Activated CD4-positive, alpha-beta memory T cell treated with anti-CD3 and anti-CD28 coated beads for 36 hours (primary cell): ENCODE measurements at regions of chr15 and their contacts with region 1.

Region 1: DNA sequence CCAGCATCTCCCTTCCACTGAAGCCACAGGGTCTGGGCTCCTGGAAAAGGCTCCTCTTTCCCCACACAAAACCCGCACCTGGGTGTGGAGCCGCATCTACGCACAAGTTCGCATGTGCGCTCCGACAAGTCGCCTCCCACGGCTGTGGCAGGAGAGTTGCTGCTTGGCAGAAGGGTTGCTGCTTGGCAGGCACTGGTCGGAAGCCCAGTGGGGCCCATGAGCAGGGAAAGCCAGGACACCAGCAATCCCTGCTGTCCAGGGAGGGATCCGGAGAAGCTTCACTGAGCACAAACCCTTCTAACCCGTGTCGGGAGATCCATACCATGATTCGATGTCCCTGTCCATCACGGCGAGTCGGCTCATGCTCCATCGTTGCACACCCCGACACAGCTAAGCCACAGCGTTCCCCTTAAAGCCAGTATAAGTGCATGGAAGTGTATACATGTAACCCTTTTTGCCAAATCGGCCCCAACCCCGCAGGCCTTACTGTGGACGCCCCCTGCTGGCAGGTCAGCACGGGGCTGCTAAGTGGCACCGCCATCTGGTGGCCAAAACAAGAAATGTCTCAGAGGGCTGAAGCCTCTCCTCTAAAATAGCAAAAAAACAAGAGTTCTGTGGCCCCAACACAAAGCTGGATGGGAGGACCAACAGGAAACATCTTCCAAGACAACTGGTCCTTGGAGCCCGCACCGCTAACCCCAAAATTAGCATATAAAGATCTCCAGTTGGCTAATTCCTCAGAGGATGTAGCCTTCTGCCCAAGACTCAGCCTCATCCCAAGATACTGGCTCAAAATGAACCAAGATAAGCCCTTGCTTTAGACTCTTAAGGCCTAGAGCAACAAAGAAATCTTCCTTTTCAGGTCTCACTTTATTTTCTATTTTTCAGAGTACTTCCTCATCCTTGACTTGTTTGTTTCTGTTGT is 8.3 kb downstream of the ANKRD63 start:
- DNase-seq: peak; percentile 91
- H3K4me3 Mint-ChIP-seq: no peak overlapping the region
- H3K27ac Mint-ChIP-seq: peak overlapping the region; percentile 28
- H3K4me1 Mint-ChIP-seq: peaks cover 6% of the 10 kb centered on the region
- H3K27me3 Mint-ChIP-seq: peaks cover 27% of the 10 kb centered on the region

Region 2: GRCh38 chr15:39782441-39783138 is 492.0 kb before region 1 on chr15 and contains the start of gene FSIP1:
- CTCF ChIA-PET with region 1: interaction called, 10 read pairs
- POLR2A ChIA-PET with region 1: no interaction called
- intact Hi-C with region 1: loop called (anchors 1 kb)
- DNase-seq: peak; percentile 97
- H3K4me3 Mint-ChIP-seq: peak within 1 kb of the TSS; percentile 79
- H3K27ac Mint-ChIP-seq: peak within 1 kb of the TSS; percentile 93
- H3K4me1 Mint-ChIP-seq: peaks cover 41% of the 10 kb centered on the region
- H3K27me3 Mint-ChIP-seq: no peaks in the 10 kb centered on the region
- total RNA-seq, gene FSIP1: 0.29 to 0.68 TPM

Region 3: DNA sequence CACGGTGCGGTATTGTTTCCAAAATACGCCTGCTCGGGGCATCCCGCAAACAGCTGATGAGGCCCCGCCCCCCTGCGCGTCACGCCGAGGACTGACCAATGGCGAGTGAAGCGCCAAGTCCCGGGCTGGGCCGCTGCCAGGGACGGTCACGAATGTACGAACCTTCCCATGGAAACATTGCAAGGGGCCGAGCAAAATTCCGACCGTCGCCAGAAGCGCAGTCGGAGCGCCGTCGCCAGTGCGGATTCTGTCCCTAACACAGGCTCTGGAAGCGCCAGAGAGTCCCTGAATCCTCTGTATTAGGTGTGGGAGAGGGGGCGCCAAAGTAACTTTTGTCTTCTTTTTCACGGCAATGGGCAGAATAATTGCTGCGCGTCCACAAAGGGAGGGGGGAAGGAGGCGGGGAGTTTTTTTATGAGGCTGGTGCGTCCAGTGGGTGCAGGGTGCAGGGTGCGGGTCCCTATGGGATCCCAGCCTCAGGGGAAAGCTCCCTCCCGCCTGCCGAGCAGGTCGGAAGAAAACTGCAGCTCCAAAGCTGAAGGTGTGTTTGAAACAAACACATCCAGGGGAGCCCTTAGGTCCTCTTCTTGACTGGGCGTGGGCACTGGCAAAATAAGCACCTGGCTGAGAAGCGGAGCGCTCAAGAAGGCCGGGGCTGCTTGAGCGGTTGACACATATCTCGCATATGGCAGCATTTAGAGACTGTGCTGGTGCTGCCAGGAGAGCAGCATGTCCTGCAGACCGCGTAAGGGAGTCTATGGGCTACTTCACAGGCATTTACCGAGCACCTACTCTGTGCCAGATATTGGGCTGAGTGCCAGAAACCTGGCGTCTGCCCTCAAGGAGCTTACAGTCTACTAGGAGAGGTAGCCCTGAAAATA is 165.5 kb before region 1 on chr15 and contains the start of gene BMF:
- CTCF ChIA-PET with region 1: interaction called, 12 read pairs
- POLR2A ChIA-PET with region 1: no interaction called
- intact Hi-C with region 1: loop called (anchors 10 kb)
- DNase-seq: peak; percentile 98
- H3K4me3 Mint-ChIP-seq: peak within 1 kb of the TSS; percentile 84
- H3K27ac Mint-ChIP-seq: peak within 1 kb of the TSS; percentile 50
- H3K4me1 Mint-ChIP-seq: peaks cover 45% of the 10 kb centered on the region
- H3K27me3 Mint-ChIP-seq: peaks cover 6% of the 10 kb centered on the region
- total RNA-seq, gene BMF: 6.9 to 7.3 TPM

Region 4: DNA sequence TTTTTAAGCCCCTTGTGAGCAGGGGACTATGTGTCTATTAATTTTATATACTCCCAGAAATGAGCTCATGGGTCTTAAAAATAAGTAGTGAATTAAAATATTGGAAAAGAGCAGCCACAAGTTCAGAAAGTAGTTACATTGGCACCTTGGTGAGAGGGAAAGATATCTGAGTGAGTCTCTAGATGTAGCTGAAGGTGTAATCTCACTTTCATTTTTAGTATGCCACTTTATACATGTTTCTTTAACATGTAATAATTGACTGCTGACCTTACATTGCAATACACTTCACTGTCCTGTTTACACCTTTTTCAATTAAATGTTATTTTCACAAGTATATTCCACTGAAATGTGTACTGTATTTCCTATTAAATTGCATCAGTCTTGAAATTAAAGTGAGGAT is 47.9 kb before region 1 on chr15:
- CTCF ChIA-PET with region 1: interaction called, 24 read pairs
- POLR2A ChIA-PET with region 1: no interaction called
- intact Hi-C with region 1: no loop called
- DNase-seq: no peak
- H3K4me3 Mint-ChIP-seq: no peak overlapping the region
- H3K27ac Mint-ChIP-seq: no peak overlapping the region
- H3K4me1 Mint-ChIP-seq: peaks cover 12% of the 10 kb centered on the region
- H3K27me3 Mint-ChIP-seq: no peaks in the 10 kb centered on the region

Region 5: DNA sequence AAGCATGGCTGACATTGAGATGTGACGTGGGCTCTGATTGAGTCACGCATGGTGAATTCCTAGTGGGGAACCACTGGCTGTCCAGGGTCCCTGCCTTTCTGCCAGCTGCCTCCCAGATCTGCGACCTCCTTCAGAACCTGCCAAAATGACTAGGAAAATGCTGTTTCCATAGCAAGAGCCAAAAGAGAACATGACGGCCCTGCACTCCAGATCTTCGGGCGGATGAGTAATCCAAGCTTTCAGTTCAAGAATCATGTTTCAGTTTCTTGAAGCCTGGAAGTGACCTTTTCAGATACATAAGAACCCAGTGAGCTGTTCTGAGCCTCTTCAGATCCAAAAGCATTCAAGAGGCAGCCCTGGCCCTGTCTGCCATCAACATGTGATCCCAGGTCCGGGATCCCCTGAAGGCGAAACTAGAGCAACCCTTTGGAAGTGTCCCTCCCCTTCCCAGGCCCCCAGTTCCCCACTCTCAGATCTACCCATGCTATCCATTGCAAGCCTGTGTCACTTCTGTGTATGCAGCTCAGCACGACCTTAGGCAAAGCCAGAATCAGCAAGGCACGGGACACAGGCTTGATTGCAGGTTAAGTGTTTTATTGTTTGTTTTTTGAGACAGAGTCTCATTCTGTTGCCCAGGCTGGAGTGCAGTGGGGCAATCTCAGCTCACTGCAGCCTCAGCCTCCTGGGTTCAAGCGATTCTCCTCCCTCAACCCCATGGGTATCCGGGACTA is 11.4 kb before region 1 on chr15:
- CTCF ChIA-PET with region 1: interaction called, 64 read pairs
- POLR2A ChIA-PET with region 1: no interaction called
- intact Hi-C with region 1: no loop called
- DNase-seq: no peak
- H3K4me3 Mint-ChIP-seq: no peak overlapping the region
- H3K27ac Mint-ChIP-seq: no peak overlapping the region
- H3K4me1 Mint-ChIP-seq: no peaks in the 10 kb centered on the region
- H3K27me3 Mint-ChIP-seq: no peaks in the 10 kb centered on the region

Region 6: DNA sequence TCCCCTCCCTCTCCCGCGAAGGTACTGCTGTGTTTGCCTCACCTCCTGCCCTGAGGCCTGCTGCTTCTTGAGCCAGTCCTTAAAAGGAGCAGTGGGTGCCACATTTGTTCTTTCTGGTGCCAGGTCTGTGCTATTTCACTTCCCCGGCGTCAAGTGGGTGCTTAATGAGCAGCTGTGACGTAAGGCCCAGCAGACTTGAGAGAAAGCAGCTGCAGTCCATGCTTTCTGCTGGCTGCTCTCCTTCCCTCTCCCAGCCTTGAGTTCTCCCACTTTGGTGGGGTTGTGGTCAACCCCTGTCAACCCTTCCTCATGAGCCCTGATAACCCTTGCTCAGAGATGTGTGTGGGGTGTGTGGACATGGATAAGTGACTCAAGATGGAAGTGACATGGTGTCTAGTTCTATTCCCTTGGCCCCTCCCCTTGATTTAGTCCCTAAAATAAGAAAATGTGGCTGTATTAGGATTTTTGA is 55.8 kb after region 1 on chr15:
- CTCF ChIA-PET with region 1: interaction called, 248 read pairs
- POLR2A ChIA-PET with region 1: no interaction called
- intact Hi-C with region 1: no loop called
- DNase-seq: no peak
- H3K4me3 Mint-ChIP-seq: no peak overlapping the region
- H3K27ac Mint-ChIP-seq: no peak overlapping the region
- H3K4me1 Mint-ChIP-seq: peaks cover 12% of the 10 kb centered on the region
- H3K27me3 Mint-ChIP-seq: no peaks in the 10 kb centered on the region